ENCODE measurements at regions of chr14 and their contacts with region 1.

Region 1: DNA sequence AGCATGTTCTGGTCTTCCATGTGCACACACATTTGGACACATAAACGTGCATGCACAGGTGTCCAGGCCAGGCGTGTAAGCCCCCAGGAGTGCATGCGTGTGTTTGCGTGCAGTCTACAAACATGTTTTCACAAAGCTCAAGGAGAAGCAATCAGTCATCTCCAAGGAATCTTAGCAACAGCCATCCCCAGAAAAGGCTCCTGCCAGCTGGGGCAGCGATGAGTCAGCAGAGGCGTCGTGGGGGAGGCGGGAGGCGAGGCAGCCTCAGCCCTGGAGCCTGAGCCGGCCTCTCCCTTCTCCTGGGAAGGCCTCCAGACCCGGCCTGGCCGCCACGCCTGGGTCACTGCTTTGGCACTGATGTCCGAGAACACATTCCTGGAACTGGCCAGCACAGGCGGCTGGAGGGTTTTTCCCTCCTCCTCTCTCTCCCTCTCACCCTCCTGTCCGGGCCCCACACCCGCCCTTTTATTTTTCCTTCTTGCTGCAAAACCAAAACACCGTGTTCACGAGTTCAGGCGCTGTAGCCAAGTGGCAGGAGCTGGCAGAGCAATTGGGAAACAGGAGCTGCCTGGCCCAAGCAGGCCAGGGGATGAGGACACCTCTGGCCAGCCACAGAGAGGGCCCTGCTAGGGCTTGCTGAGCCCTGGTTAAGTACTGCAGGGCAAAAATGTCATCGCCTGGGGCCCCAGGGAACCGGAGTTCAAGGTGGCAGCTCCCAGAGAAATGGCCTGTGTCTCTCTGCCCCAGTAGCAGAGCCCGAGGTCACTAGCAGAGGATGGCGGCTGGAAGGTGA is 92.7 kb downstream of the LRRC74A start:
- DNase-seq: peak; percentile 69

Region 2: DNA sequence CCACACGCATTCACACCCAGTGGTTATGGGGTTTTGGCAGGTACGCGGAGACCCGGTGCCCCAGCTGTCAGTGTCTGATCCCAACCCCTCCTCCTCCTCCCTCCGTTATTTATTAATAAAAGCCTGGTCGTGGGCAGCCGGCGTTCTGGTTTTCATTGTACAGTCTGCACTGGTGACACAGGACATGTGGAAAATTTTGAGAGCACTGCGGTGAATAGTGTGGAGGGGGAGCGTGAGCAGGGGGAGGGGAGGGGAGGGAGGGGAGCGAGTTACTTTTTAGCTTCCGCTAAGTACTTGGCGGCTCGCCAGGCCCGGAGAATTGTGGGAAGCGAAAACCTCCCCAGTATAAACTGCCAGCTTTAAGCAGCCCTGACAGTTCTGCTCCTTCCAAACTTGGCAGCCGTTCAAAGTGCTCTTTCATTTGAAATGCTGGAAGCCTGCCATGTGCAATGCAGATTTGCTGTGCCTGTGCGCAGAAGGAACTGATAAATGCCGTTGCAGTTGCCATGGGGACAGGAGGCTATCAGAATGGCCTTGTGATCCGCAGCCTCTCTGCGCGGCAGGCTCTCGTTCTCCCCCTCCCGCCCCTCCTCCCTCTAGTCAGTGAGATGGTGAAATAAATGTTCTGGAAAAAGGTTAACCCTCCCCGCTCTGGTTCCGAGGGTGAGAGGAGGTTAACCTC is 121.3 kb after region 1 on chr14:
- CTCF ChIA-PET with region 1: interaction called, 3 read pairs
- POLR2A ChIA-PET with region 1: interaction called, 15 read pairs
- DNase-seq: peak; percentile 78

Region 3: GRCh38 chr14:77059276-77059915 is 140.4 kb after region 1 on chr14:
- CTCF ChIA-PET with region 1: interaction called, 12 read pairs
- POLR2A ChIA-PET with region 1: no interaction called
- DNase-seq: peak; percentile 71